Prostate gland (tissue), 2 donors: ENCODE measurements at regions of chr16 and their contacts with region 1.

Region 1: DNA sequence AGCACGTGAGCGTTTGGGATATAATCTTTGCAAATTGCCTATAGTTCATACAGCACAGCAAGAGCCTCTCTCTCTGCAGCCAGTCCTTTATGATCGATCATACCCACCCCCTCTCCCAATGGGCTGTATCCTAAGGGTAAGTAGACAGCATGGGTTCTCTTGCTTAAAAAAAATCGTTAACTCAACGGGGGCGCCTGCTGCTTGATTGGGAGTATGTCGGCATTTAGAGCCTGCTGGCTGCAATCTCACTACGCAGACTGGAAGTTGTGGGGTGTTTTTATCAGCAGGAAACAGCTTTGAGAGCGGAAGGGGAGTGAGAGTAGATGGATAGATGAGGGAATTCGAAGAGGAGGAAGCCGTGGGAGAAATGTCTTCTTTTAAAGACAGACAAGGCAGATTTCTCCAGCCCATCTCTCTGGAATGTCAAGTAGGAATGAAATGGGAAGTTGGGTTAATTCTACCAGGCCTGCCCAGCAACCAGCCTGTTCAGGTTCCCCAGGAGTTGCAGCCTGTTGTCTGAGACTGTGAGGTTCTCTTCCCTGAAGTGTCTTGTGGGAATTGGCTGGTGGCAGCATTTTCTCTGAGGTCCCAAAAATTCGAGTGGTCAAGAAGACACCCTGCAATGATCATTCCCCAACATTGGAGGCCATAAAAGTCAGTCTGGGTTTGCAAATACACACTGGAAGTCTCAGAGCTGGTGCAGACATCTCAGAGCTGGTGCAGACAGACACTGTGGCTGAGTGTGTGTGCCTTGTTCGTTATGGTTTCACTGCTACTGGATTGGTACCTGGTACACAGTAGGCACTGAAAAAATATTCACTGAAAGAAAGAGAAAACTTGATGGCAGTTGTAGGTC is 65.6 kb downstream of the PRKCB start:
- DNase-seq: no peak
- H3K4me3 ChIP-seq: no peak overlapping the region
- H3K27ac ChIP-seq: no peak overlapping the region
- H3K4me1 ChIP-seq: no peaks in the 10 kb centered on the region
- H3K27me3 ChIP-seq: no peaks in the 10 kb centered on the region
- CTCF ChIP-seq: no peak
- POLR2A ChIP-seq: no peak

Region 2: GRCh38 chr16:23835390-23836077 is 65.9 kb before region 1 on chr16 and contains the start of gene PRKCB:
- intact Hi-C with region 1: loop called (anchors 5 kb)
- DNase-seq: peak; percentile 68
- H3K4me3 ChIP-seq: peak within 1 kb of the TSS; percentile 30 to 34
- H3K27ac ChIP-seq: no peak within 1 kb of the TSS
- H3K4me1 ChIP-seq: no peaks in the 10 kb centered on the region
- H3K27me3 ChIP-seq: peaks cover 5% of the 10 kb centered on the region
- CTCF ChIP-seq: no peak
- POLR2A ChIP-seq: no peak
- total RNA-seq, gene PRKCB: 2.9 to 28.6 TPM